GM23248 (cell line): ENCODE measurements at regions of chr6 and their contacts with region 1.

Region 1: GRCh38 chr6:127539272-127539671 is 20.1 kb upstream of the MTCL3 start:
- DNase-seq: peak; percentile 63
- H3K4me3 ChIP-seq: no peak overlapping the region
- H3K27ac ChIP-seq: no peak overlapping the region
- H3K4me1 ChIP-seq: no peaks in the 10 kb centered on the region
- H3K27me3 ChIP-seq: no peaks in the 10 kb centered on the region

Region 2: GRCh38 chr6:127464881-127465459 is 74.3 kb before region 1 on chr6:
- in situ Hi-C with region 1: loop called (anchors 5 kb)
- DNase-seq: peak; percentile 88
- H3K4me3 ChIP-seq: peak overlapping the region; percentile 16
- H3K27ac ChIP-seq: peak overlapping the region; percentile 79
- H3K4me1 ChIP-seq: peaks cover 22% of the 10 kb centered on the region
- H3K27me3 ChIP-seq: no peaks in the 10 kb centered on the region

Region 3: DNA sequence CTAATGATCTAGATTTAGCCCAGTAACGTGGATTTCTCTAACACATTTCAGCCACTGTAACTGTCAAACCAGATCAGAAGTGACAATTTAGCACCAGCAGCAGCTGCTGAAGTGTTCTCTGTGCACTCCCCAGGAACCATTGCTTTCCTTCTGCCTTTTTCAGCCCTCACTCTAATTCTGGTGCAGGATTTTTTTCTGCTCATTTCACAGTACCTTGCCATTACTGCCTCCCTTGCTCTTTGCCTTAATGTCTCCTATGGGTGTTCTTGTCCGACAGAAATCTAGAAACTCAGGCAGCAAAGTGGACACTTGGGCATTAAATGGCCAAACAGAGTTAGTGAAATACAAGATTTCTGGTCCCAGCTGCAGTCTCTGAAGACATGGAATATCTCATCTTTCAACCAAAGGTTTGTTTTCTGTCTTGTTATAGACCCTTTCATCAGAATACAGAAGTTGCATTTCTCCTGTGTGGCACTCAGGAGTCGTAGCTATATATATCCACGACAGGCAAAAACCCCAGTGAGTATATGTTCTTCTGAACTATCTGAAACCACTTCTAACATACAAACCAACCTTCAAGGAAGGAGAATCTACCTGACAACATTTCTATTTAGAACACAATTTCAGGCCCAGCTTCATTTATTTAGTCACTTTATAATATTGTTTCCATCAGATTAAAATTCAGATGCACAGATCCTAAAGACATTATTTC is 268.7 kb after region 1 on chr6:
- in situ Hi-C with region 1: no loop called
- DNase-seq: no peak
- H3K4me3 ChIP-seq: no peak overlapping the region
- H3K27ac ChIP-seq: no peak overlapping the region
- H3K4me1 ChIP-seq: no peaks in the 10 kb centered on the region
- H3K27me3 ChIP-seq: no peaks in the 10 kb centered on the region